ENCODE measurements at regions of chr16 and their contacts with region 1.

Region 1: DNA sequence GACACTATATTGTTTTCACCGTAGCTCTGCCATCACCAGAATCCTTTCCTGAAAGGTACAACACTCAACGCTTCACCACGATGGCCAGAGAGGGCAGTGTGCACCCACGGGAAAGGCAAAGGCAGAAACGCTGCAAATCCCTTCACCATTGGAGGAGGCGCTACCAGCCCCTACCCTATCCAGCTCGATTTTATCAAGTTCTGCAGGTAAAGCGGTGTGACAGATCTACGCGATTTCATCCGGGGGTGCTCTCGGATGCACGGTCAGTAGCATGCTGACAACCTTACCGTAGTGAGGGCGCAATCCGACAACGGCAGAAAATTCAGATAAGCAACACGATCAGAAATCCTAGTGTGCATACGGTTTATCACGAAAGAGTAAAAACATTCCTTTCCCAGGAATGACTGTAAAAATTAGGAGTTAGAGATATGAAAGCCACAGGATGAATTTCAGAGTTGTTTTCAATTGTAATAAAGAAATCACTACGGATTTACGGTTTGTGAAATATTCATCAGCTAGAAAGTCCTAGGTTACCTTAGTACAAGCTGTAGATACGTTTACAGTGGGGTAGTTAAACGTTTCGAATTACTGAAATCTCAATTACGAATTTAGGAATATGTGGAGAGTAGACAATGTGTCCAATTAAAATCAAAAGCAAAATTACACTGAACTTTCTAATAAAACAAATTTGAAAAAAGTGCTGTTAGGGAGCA is 1.8 kb downstream of the NETO2 start:
- DNase-seq: peak; percentile 92
- ATAC-seq: peak; percentile 69
- H3K4me3 Mint-ChIP-seq: peak overlapping the region; percentile 77
- H3K27ac Mint-ChIP-seq: peak overlapping the region; percentile 49
- H3K4me1 Mint-ChIP-seq: peaks cover 41% of the 10 kb centered on the region
- H3K27me3 Mint-ChIP-seq: peaks cover 22% of the 10 kb centered on the region

Region 2: DNA sequence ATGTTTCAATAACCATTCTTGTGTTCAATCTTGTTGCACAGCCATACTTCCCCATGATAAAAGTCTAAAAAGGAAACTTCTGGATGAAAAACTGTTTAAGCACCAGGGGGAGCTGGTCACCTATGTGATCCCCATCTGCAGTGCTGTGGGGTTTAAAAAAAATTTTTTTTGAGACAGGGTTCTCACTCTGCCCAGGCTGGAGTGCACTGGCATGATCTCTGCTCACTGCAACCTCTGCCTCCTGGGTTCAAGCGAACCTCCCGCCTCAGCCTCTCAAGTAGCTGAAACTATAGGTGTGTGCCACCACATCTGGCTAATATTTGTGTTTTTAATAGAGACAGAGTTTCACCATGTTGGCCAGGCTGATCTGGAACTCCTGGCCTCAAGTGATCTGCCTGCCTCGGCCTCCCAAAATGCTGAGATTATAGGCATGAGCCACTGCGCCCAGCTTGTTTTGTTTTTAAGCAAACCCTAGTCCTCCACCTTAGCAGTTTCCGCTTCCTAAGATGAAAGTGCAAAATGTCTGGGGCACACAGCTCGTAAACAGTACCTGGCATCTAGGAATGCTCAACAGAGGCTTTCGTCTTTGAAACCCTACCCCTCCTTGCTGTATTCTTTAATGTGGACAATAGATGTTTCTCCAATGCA is 193.9 kb before region 1 on chr16:
- CTCF ChIA-PET with region 1: interaction called, 14 read pairs
- DNase-seq: peak; percentile 48
- ATAC-seq: peak; percentile 67
- H3K4me3 Mint-ChIP-seq: no peak overlapping the region
- H3K27ac Mint-ChIP-seq: no peak overlapping the region
- H3K4me1 Mint-ChIP-seq: peaks cover 21% of the 10 kb centered on the region
- H3K27me3 Mint-ChIP-seq: no peaks in the 10 kb centered on the region

Region 3: DNA sequence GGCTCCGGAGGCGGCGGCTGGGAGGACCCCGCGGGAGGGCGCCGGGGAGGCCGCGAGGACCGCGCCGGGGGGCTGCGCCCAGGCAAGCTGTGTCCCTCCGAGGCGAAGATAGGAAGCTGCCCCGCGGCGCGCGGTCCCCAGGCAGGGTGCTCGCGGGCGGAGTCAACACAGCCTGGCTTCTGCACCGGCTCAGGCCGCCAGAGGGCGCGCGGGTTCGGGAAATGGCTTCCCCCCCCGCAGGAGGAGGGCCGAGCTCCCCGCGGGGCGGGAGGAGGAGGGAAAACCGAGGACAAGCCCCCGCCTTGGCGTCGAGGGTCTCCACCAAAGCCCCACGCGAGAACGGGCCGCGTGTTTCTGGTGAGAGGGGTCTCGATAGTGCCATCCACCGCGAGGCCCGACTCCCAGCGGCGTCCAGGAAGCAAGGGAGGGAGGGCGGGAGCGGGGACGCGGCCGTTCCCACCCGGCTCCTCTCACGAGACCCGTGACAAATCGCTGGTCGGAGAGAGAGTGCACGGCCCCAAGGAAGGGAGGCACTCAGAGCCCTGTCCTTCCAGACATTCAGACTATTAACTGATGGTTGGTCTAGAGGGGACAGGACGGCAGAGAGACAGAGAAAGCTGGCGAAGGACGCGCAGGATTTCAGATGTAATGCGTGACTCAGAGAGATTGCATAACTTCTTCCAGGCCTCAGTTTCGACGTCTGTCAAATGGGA is 104.0 kb before region 1 on chr16:
- CTCF ChIA-PET with region 1: interaction called, 57 read pairs
- DNase-seq: peak; percentile 90
- ATAC-seq: peak; percentile 99
- H3K4me3 Mint-ChIP-seq: peak overlapping the region; percentile 71
- H3K27ac Mint-ChIP-seq: no peak overlapping the region
- H3K4me1 Mint-ChIP-seq: peaks cover 8% of the 10 kb centered on the region
- H3K27me3 Mint-ChIP-seq: peaks cover 28% of the 10 kb centered on the region

Region 4: GRCh38 chr16:47162670-47163420 is 20.9 kb after region 1 on chr16:
- CTCF ChIA-PET with region 1: interaction called, 12 read pairs
- DNase-seq: no peak
- ATAC-seq: no peak
- H3K4me3 Mint-ChIP-seq: no peak overlapping the region
- H3K27ac Mint-ChIP-seq: no peak overlapping the region
- H3K4me1 Mint-ChIP-seq: no peaks in the 10 kb centered on the region
- H3K27me3 Mint-ChIP-seq: no peaks in the 10 kb centered on the region

Region 5: GRCh38 chr16:47561286-47561685 is 419.4 kb after region 1 on chr16:
- CTCF ChIA-PET with region 1: no interaction called
- DNase-seq: no peak
- ATAC-seq: no peak
- H3K4me3 Mint-ChIP-seq: no peak overlapping the region
- H3K27ac Mint-ChIP-seq: no peak overlapping the region
- H3K4me1 Mint-ChIP-seq: peaks cover 15% of the 10 kb centered on the region
- H3K27me3 Mint-ChIP-seq: no peaks in the 10 kb centered on the region

Region 6: DNA sequence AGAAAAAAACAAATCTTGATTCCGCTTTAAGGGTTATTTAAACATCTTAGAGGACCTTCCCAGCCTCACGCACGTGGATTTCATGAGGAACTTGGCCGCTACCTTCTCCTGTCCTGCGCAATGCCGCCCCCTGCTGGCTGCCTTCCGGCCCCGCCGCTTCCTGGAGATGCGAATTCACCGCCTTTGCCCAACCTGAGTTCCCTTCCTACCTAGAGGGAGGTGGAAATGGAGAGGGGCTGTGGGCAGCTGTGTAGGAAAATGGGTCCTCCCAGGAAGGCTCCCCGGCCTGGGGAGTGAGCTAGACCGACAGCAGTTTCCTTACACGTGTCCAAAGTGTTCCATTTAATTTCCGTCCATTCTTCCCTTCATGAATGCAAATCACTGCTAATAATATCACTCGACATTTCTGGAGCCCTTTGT is 1014.9 kb after region 1 on chr16:
- CTCF ChIA-PET with region 1: interaction called, 38 read pairs
- DNase-seq: peak; percentile 84
- ATAC-seq: peak; percentile 66
- H3K4me3 Mint-ChIP-seq: no peak overlapping the region
- H3K27ac Mint-ChIP-seq: no peak overlapping the region
- H3K4me1 Mint-ChIP-seq: peaks cover 23% of the 10 kb centered on the region
- H3K27me3 Mint-ChIP-seq: peaks cover 48% of the 10 kb centered on the region

Measured in activated CD8-positive, alpha-beta memory T cell treated with anti-CD3 and anti-CD28 coated beads, Interleukin-2, amount 10 ng/mL, durations not matched to agents 7 days and 5 days (primary cell).